Activated CD4-positive, alpha-beta T cell treated with anti-CD3 and anti-CD28 coated beads for 36 hours (primary cell): ENCODE measurements at regions of chr10 and their contacts with region 1.

Region 1: DNA sequence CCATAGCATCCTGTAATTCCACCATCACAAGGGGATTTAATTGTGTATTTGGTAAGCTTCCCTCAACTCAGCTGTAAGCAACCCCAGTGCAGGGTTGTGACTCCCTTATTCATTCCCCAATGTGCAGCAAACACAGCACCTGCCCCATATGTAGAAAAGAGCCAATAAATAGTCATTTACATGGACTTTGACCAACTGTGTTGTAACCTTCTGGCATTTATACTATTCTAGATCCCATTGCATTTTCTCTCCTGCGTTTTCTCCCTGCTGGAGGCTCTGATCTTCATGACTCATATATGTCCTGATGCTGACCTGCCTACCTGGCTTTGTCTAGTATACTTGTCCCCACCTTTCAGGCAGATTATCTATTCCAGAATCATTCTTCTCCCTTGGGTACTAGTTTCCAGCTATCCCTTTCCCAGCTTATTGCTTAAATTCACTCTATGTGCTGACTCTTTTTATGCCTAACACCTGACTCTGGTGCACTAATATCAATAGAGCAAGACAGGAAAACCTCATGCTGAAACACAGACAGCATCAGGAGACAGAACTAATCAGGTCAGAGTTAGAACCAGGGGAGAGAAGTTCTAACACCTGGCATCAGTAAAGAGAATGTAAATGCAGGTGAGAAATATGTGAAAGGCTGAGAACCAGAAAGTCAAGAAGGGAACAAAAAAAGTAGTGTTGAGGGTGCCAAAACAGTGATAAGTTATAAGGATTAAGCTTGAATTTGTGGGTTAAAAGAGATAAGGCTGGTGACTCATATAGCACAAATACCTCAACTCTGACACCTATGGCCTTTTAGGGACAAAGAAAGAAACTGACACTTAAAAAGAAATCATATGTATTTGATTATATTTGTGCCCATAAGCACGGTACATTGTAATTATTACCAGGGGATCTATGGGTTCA is 402.7 kb downstream of the IPMK start:
- DNase-seq: no peak
- ATAC-seq: no peak
- H3K4me3 Mint-ChIP-seq: no peak overlapping the region
- H3K27ac Mint-ChIP-seq: no peak overlapping the region
- H3K4me1 Mint-ChIP-seq: no peaks in the 10 kb centered on the region
- H3K27me3 Mint-ChIP-seq: no peaks in the 10 kb centered on the region

Region 2: GRCh38 chr10:56449770-56450169 is 1415.3 kb before region 1 on chr10:
- CTCF ChIA-PET with region 1: no interaction called
- POLR2A ChIA-PET with region 1: no interaction called
- intact Hi-C with region 1: no loop called
- DNase-seq: no peak
- ATAC-seq: no peak
- H3K4me3 Mint-ChIP-seq: no peak overlapping the region
- H3K27ac Mint-ChIP-seq: no peak overlapping the region
- H3K4me1 Mint-ChIP-seq: no peaks in the 10 kb centered on the region
- H3K27me3 Mint-ChIP-seq: no peaks in the 10 kb centered on the region

Region 3: GRCh38 chr10:57897611-57898010 is 32.6 kb after region 1 on chr10:
- CTCF ChIA-PET with region 1: no interaction called
- POLR2A ChIA-PET with region 1: no interaction called
- intact Hi-C with region 1: loop called in 1 of 2 experiments (anchors 2 kb)
- DNase-seq: no peak
- ATAC-seq: no peak
- H3K4me3 Mint-ChIP-seq: no peak overlapping the region
- H3K27ac Mint-ChIP-seq: no peak overlapping the region
- H3K4me1 Mint-ChIP-seq: no peaks in the 10 kb centered on the region
- H3K27me3 Mint-ChIP-seq: no peaks in the 10 kb centered on the region